Sigmoid colon (tissue), 7 donors: ENCODE measurements at regions of chr10 and their contacts with region 1.

Region 1: GRCh38 chr10:86899670-86900276 is 57.6 kb downstream of the MMRN2 start:
- DNase-seq: peak; percentile 86
- H3K4me3 ChIP-seq: no peak overlapping the region
- H3K27ac ChIP-seq: peak overlapping the region; percentile 54 to 78 (median 68)
- H3K4me1 ChIP-seq: peaks cover 0 to 35% (median 23%) of the 10 kb centered on the region in 4 donors
- H3K27me3 ChIP-seq: no peaks in the 10 kb centered on the region
- CTCF ChIP-seq: peak; percentile 74 to 79 (median 76)
- EP300 ChIP-seq: no peak
- POLR2A ChIP-seq: no peak

Region 2: GRCh38 chr10:86500846-86501245 is 398.9 kb before region 1 on chr10:
- intact Hi-C with region 1: no loop called
- DNase-seq: no peak
- H3K4me3 ChIP-seq: no peak overlapping the region
- H3K27ac ChIP-seq: no peak overlapping the region
- H3K4me1 ChIP-seq: peaks cover 0 to 38% (median 13%) of the 10 kb centered on the region in 4 donors
- H3K27me3 ChIP-seq: no peaks in the 10 kb centered on the region
- CTCF ChIP-seq: no peak
- EP300 ChIP-seq: no peak
- POLR2A ChIP-seq: no peak

Region 3: DNA sequence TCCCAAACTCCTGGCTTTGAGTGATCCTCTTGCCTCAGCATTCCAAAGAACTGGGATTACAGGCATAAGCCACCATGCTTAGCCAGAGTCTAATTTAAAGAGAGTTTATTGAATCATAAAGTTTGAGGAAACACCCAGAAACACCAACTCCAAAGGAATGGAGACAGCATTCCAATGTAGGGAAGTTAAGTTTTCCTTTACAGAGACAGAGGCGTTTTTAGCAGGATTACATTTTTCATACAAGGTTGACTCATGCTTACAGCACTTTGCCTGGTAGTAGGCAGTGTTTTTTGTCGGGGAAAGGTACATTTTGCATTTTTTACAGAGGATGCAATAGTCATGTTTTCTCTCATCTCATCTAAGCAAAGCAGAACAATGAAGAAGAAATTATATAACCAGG is 264.4 kb before region 1 on chr10:
- intact Hi-C with region 1: no loop called
- DNase-seq: no peak
- H3K4me3 ChIP-seq: no peak overlapping the region
- H3K27ac ChIP-seq: peak overlapping the region in 1 of 4 donors; percentile 31
- H3K4me1 ChIP-seq: peaks cover 0 to 15% (median 6%) of the 10 kb centered on the region in 4 donors
- H3K27me3 ChIP-seq: no peaks in the 10 kb centered on the region
- CTCF ChIP-seq: no peak
- EP300 ChIP-seq: no peak
- POLR2A ChIP-seq: no peak

Region 4: DNA sequence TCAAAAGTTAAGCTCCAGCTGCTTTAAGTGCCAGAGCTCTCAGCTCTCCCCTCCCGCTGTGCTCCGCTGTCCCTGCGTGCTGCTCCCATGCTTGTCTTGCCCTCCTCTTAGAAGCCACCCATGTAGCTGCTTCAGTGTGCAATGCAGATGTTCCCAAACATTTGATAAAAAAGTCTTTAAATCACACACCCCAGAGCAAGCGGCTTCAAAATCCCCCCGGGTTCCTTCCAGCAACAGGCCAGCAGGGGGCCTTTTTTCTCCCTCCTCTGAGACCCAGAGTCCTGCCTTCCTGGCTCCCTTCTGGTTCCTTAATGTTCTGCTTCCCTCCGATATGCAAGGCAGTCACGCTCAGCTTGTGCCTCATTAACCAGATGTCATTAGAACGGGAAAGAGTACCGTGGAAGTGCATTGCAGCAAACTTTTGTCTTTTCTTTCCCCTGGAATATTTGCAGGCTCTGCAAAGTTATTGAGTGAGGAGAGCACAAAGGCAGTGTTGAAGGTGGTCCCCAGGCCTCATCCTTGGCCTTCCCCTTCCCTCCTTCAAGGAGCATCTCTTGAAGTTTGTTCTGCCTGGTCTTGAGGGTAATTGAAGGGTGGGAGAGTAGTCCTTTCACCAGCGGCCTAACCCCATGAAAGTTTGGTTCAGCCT is 205.9 kb before region 1 on chr10:
- intact Hi-C with region 1: loop called (anchors 2 kb)
- DNase-seq: no peak
- H3K4me3 ChIP-seq: no peak overlapping the region
- H3K27ac ChIP-seq: peak overlapping the region in 3 of 4 donors; percentile 38 to 95 (median 48)
- H3K4me1 ChIP-seq: peaks cover 0 to 53% (median 40%) of the 10 kb centered on the region in 4 donors
- H3K27me3 ChIP-seq: no peaks in the 10 kb centered on the region
- CTCF ChIP-seq: peak; percentile 30 to 65 (median 60)
- EP300 ChIP-seq: no peak
- POLR2A ChIP-seq: no peak

Region 5: GRCh38 chr10:86710987-86711512 is 188.7 kb before region 1 on chr10:
- intact Hi-C with region 1: loop called (anchors 1 kb)
- DNase-seq: peak; percentile 97
- H3K4me3 ChIP-seq: peak overlapping the region; percentile 45 to 82 (median 66)
- H3K27ac ChIP-seq: peak overlapping the region; percentile 93 to 99 (median 96)
- H3K4me1 ChIP-seq: peaks cover 0 to 32% (median 22%) of the 10 kb centered on the region in 4 donors
- H3K27me3 ChIP-seq: no peaks in the 10 kb centered on the region
- CTCF ChIP-seq: peak; percentile 76 to 88 (median 80)
- EP300 ChIP-seq: no peak
- POLR2A ChIP-seq: peak; percentile 44 to 77

Region 6: GRCh38 chr10:86757114-86757932 is 142.4 kb before region 1 on chr10:
- intact Hi-C with region 1: loop called (anchors 2 kb)
- DNase-seq: peak; percentile 82
- H3K4me3 ChIP-seq: peak overlapping the region; percentile 69 to 88 (median 83)
- H3K27ac ChIP-seq: peak overlapping the region; percentile 98 to 100 (median 99)
- H3K4me1 ChIP-seq: peaks cover 0 to 63% (median 52%) of the 10 kb centered on the region in 4 donors
- H3K27me3 ChIP-seq: no peaks in the 10 kb centered on the region
- CTCF ChIP-seq: peak in 3 of 4 experiments; percentile 14 to 43 (median 39)
- EP300 ChIP-seq: no peak
- POLR2A ChIP-seq: peak in 1 of 2 donors; percentile 33

Region 7: DNA sequence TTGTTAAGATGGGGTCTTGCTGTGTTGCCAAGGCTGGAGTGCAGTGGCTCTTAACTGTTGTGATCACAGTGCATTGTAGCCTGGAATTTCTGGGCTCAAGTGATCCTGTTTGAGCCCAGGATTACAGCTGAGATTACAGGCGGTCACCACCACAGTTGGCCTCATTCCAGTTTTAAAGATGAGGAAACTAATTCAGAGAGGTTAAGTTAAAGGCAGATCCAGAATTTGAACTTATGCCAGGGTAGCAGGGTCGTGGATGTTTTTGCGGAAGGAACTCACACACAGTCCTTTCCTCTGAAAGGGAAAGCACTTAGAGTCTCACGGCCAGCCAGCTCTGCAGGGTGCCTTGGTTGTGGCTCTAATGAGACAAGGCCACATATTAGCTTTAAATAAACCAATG is 27.0 kb before region 1 on chr10:
- intact Hi-C with region 1: no loop called
- DNase-seq: no peak
- H3K4me3 ChIP-seq: no peak overlapping the region
- H3K27ac ChIP-seq: peak overlapping the region in 2 of 4 donors; percentile 25 to 56
- H3K4me1 ChIP-seq: peaks cover 0 to 51% (median 39%) of the 10 kb centered on the region in 4 donors
- H3K27me3 ChIP-seq: no peaks in the 10 kb centered on the region
- CTCF ChIP-seq: no peak
- EP300 ChIP-seq: no peak
- POLR2A ChIP-seq: no peak